ENCODE measurements at regions of chr15 and their contacts with region 1.

Region 1: GRCh38 chr15:87326274-87326673 is 930.3 kb downstream of the NTRK3 start:
- DNase-seq: no peak
- ATAC-seq: no peak
- H3K4me3 ChIP-seq: no peak overlapping the region
- H3K27ac ChIP-seq: no peak overlapping the region
- H3K4me1 ChIP-seq: no peaks in the 10 kb centered on the region
- H3K27me3 ChIP-seq: no peaks in the 10 kb centered on the region
- CTCF ChIP-seq: no peak

Region 2: DNA sequence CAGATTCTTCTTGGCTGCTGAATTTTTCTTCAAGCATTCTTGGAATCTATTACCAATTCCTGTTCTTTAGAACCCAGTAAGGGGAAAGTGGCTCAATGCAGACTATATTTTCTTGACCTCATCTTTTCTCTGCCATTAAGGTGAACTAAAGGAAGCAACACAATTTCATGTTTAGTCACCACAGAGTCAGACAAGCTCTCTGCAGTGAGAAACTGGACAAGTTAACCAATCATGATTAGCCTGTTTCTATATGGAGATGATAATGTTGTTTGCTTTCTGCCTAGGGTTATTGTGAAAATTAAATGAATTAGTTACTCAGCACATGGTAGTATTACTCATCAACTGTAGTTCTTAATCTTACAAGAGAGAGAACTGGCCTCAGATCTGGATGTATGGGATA is 171.5 kb before region 1 on chr15:
- intact Hi-C with region 1: loop called in 1 of 10 experiments (anchors 10 kb)
- DNase-seq: no peak
- ATAC-seq: no peak
- H3K4me3 ChIP-seq: no peak overlapping the region
- H3K27ac ChIP-seq: no peak overlapping the region
- H3K4me1 ChIP-seq: no peaks in the 10 kb centered on the region
- H3K27me3 ChIP-seq: peaks cover 0 to 12% (median 0%) of the 10 kb centered on the region in 7 donors
- CTCF ChIP-seq: no peak